ENCODE measurements at regions of chr1 and their contacts with region 1.

Region 1: DNA sequence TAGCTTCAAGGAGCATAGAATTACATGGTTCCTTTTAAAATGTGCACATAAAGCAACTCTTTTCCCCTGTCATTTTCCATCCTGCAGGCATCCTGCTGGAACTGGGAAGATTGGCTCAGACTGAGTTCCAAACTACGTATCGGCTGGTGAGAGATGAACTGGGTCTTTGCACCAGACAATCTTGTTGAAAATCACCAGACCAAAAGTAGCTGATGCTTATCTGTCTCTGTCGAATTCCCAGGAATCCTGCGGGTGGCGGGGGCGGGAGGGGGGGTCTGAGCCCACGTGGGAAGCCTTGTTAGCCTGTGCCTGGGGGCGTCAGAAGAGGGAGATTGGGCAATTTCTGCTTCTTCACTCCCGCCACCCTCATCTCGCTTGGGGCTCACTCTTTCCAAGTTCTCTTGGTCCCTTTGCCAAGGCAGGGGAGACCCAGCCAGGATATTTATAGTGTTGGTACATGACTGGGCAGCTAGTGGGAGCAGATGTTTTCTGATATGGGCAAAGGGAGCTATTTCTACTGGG is 90.1 kb upstream of the SLC25A33 start:
- DNase-seq: peak; percentile 79 to 90
- ATAC-seq: peak; percentile 77 to 84
- H3K4me3 ChIP-seq: peak overlapping the region; percentile 7 to 38 (median 32)
- H3K27ac ChIP-seq: peak overlapping the region; percentile 82 to 96 (median 88)
- H3K4me1 ChIP-seq: peaks cover 39 to 46% of the 10 kb centered on the region in 2 donors
- H3K27me3 ChIP-seq: no peaks in the 10 kb centered on the region
- CTCF ChIP-seq: no peak
- POLR2A ChIP-seq: no peak

Region 2: DNA sequence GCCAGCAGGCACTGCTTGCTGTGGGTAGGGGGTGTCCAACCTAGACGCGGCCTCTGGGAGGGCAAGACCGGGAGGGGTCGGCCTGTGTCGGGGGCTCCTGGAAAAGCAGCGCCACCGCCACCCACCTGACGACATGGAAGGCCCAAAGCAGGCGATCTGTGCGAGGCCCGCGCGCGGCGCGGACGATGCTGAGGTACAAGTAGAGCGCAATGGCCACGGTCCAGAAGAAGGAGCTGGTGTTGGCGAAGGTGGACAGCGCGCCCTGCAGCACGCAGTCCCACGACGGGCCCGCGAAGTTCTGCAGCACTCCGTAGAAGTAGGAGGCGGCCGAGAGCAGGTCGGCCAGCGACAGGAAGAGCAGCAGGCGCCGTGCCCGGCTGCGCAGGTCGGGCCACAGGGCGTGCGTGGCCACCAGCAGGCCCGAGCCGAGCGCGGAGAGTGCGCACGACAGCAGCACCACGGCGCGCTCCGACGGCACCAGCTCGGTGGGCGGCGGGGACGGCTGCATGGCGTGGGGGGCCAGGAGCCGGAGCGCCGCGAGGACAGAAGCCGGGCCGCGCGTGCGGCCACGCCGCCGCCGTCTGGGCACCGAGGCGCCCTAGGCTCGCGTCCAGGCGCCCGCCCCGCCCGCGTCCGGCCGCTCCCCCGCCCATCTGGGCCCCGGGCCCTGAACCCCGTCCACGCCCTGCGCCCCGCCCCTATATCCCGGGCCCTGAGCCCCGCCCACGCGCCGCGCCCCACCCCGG is 320.5 kb before region 1 on chr1 and contains the start of gene GPR157:
- in situ Hi-C with region 1: no loop called
- intact Hi-C with region 1: loop called (anchors 5 kb)
- DNase-seq: peak; percentile 86 to 87
- ATAC-seq: peak; percentile 53 to 65
- H3K4me3 ChIP-seq: peak within 1 kb of the TSS; percentile 72 to 97 (median 82)
- H3K27ac ChIP-seq: peak within 1 kb of the TSS; percentile 94 to 99 (median 98)
- H3K4me1 ChIP-seq: peaks cover 26 to 39% of the 10 kb centered on the region in 2 donors
- H3K27me3 ChIP-seq: no peaks in the 10 kb centered on the region
- CTCF ChIP-seq: peak in 4 of 5 experiments; percentile 22 to 43 (median 37)
- POLR2A ChIP-seq: peak; percentile 96 to 97
- total RNA-seq, gene GPR157: 12.9 to 38.1 (median 18.9) TPM

Region 3: DNA sequence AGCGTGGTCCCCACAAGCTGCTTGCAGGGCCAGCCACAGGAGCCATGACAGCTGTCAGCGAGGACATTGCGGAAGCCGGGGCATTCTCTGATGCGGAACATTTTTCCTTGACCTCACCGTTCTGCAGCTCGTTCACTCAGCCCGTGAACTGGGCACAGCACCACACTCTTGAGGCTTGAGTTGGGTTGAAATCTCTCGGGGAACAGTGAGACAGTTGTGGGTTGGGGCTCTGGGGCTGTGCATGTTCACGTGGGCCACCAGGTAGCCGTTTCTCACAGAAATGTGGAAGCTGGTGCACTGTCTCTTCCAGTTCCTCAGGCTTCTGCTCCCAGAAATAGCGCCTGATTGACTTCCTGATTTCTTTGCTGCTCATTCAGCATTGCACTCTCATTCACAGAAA is 86.7 kb before region 1 on chr1:
- in situ Hi-C with region 1: no loop called
- intact Hi-C with region 1: loop called (anchors 5 kb)
- DNase-seq: no peak
- ATAC-seq: peak in 1 of 2 donors; percentile 17
- H3K4me3 ChIP-seq: no peak overlapping the region
- H3K27ac ChIP-seq: peak overlapping the region; percentile 27 to 82 (median 67)
- H3K4me1 ChIP-seq: peaks cover 14 to 26% of the 10 kb centered on the region in 2 donors
- H3K27me3 ChIP-seq: no peaks in the 10 kb centered on the region
- CTCF ChIP-seq: no peak
- POLR2A ChIP-seq: no peak

Region 4: DNA sequence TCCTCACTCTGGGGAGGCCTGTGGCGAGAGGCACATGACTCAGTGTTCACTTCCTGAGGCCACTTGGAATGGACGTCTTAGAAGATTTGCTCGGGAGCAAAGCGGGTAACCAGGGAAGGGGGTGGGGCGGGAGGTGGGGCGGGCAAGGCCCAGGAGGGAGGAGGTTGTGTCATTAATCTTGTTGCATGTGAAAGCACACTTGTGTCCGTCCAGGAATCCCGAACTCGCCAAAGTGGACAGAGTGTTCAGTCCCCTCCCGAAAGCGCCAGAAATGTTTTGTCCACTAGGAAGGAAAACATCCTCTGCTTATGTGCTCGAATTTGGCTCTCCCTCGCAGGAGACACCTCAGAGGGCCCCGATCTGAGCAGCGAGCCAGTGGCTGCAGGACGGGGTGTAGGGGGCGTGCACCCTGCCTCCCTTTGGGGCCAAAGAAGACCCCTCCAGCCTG is 72.3 kb before region 1 on chr1:
- in situ Hi-C with region 1: loop called in 2 of 4 experiments (anchors 5 to 10 kb)
- intact Hi-C with region 1: loop called (anchors 2 kb)
- DNase-seq: peak; percentile 93 to 95
- ATAC-seq: peak; percentile 94 to 95
- H3K4me3 ChIP-seq: peak overlapping the region in 2 of 4 donors; percentile 3 to 14
- H3K27ac ChIP-seq: peak overlapping the region; percentile 89 to 94 (median 92)
- H3K4me1 ChIP-seq: peaks cover 34 to 35% of the 10 kb centered on the region in 2 donors
- H3K27me3 ChIP-seq: no peaks in the 10 kb centered on the region
- CTCF ChIP-seq: peak in 1 of 5 experiments; percentile 16
- POLR2A ChIP-seq: peak; percentile 42 to 79

Region 5: DNA sequence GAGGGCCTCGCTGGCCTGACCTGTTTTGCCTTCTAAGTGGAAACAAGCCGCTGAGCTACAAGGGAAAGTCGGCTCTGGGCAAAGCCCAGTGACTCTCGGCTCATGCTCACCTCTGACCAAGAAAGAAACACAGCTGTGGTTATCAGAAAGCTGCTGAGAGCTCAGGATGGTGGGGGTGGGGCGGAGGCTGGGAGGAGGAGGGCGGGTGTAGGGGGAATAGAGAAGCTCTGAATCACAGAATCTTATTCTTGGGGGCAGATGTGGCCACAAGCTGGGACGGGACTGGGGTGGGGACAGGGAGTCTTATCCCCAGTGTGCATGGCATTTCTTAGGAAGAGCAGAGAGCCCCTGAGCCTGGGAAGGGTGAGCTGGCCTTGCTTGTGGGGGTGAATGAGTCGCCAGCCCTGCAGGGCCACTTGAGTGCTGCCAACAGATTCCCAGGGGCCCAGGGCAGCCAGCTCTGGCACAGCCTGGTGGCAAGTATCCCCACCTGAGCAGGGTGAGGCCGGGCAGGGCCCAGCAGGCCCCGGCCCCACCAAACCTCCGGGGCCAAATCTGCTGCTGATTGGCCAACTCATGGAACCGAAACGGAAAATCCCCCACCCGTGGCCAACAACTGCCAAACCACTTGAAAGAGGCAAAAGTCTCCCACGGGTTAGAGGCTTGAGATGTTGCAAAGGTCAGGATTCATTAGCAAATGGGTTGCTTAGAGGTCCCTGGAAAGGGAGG is 35.9 kb before region 1 on chr1:
- in situ Hi-C with region 1: no loop called
- intact Hi-C with region 1: no loop called
- DNase-seq: peak; percentile 56 to 74
- ATAC-seq: peak; percentile 84 to 88
- H3K4me3 ChIP-seq: no peak overlapping the region
- H3K27ac ChIP-seq: peak overlapping the region; percentile 80 to 87 (median 84)
- H3K4me1 ChIP-seq: peaks cover 19 to 22% of the 10 kb centered on the region in 2 donors
- H3K27me3 ChIP-seq: no peaks in the 10 kb centered on the region
- CTCF ChIP-seq: no peak
- POLR2A ChIP-seq: no peak